Tibial artery (tissue), 4 donors: ENCODE measurements at regions of chr13 and their contacts with region 1.

Region 1: GRCh38 chr13:30774214-30774730 is 38.9 kb downstream of the ALOX5AP start:
- DNase-seq: no peak
- H3K4me3 ChIP-seq: no peak overlapping the region
- H3K27ac ChIP-seq: no peak overlapping the region
- H3K4me1 ChIP-seq: no peaks in the 10 kb centered on the region
- H3K27me3 ChIP-seq: no peaks in the 10 kb centered on the region
- CTCF ChIP-seq: no peak

Region 2: GRCh38 chr13:31009166-31009565 is 234.9 kb after region 1 on chr13:
- intact Hi-C with region 1: loop called (anchors 10 kb)
- DNase-seq: no peak
- H3K4me3 ChIP-seq: no peak overlapping the region
- H3K27ac ChIP-seq: no peak overlapping the region
- H3K4me1 ChIP-seq: peaks cover 0 to 16% (median 2%) of the 10 kb centered on the region in 4 donors
- H3K27me3 ChIP-seq: no peaks in the 10 kb centered on the region
- CTCF ChIP-seq: no peak

Region 3: DNA sequence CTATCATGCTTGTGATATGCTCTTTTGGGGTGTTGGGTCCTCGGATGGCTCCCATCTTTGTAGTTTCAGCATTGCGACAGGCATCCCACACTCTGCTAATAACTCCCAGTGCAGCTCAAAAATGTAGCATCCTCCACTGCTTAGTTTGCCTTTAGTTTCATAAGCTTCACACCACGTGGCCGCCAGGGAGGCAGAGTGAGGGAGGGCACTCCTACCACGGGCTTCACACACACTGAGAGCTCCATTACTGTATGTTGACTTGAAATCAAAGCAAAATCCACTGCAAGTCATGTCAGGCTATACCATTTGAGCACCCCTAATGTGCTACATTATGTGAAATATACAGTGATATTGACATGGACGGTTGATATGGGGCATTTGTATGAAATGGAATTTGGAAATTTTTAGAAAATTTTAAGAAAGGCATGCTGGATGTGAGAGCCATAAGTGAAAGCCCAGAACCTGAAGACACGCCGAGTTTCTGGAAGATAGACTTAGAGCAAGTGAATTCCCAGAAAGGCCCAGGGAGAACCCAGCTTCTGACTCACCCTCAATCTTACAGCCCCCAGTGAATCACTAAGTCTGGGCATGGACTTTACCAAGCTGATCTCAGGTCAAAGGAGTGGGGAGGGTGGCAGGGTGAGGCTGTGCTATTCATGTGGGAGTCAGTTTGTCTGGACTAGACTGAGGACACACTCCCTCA is 293.3 kb after region 1 on chr13:
- intact Hi-C with region 1: no loop called
- DNase-seq: no peak
- H3K4me3 ChIP-seq: no peak overlapping the region
- H3K27ac ChIP-seq: no peak overlapping the region
- H3K4me1 ChIP-seq: no peaks in the 10 kb centered on the region
- H3K27me3 ChIP-seq: no peaks in the 10 kb centered on the region
- CTCF ChIP-seq: no peak